A549 (cell line): ENCODE measurements at regions of chr11 and their contacts with region 1.

Region 1: DNA sequence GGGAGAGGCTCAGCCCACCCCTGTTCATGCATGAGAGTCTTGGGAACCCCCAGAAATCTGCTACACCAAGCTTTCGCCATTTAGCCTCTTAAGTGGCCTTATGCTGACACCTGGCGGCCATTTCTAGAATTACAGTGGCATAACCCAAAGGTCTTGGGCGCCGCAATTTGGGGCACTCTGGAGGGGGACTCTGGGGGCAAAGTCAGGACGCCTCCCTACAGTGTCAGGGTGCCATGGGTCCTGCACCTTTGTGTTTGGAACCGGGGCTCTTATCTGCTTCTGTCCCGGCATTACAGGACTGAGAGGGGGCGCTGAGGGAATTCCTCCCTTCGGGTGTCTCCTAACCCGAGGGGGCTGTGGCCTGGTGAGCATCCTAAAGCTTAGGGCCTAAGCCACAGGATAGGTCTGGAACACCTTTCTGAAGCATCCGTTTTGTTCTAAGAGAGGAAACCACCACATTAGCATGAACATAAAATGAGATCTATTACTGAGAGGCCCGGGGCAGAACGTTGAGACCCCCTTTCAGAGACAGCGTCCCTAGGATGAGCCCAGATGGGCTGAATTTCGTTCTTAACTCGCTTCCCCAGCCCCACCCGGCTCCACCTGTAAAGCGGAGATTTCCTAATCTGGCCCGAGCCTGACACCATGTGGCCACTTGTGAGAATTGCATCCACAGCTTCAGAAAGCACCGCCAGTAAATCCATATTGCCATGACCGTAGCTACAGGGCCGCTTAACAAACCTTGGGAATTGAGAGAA is 9.3 kb downstream of the INS start:
- DNase-seq: peak; percentile 85 to 90
- ATAC-seq: peak; percentile 33 to 53; a peak in 5 of 6 replicates
- H3K4me3 ChIP-seq: no peak overlapping the region
- H3K27ac ChIP-seq: peak overlapping the region; percentile 9 to 63; a peak in 4 of 6 replicates
- H3K4me1 ChIP-seq: no peaks in the 10 kb centered on the region
- CTCF ChIP-seq: peak; percentile 64
- EP300 ChIP-seq: no peak
- POLR2A ChIP-seq: no peak
- RAD21 ChIP-seq: peak; percentile 78 to 89

Region 2: GRCh38 chr11:1694064-1694845 is 457.4 kb before region 1 on chr11:
- CTCF ChIA-PET with region 1: interaction called, 179 read pairs
- POLR2A ChIA-PET with region 1: no interaction called
- DNase-seq: peak; percentile 80 to 88
- ATAC-seq: peak; percentile 82 to 95
- H3K4me3 ChIP-seq: peak overlapping the region; percentile 62
- H3K27ac ChIP-seq: peak overlapping the region; percentile 87 to 92
- H3K4me1 ChIP-seq: no peaks in the 10 kb centered on the region
- CTCF ChIP-seq: peak; percentile 88
- EP300 ChIP-seq: no peak
- POLR2A ChIP-seq: no peak
- RAD21 ChIP-seq: peak; percentile 94 to 99

Region 3: DNA sequence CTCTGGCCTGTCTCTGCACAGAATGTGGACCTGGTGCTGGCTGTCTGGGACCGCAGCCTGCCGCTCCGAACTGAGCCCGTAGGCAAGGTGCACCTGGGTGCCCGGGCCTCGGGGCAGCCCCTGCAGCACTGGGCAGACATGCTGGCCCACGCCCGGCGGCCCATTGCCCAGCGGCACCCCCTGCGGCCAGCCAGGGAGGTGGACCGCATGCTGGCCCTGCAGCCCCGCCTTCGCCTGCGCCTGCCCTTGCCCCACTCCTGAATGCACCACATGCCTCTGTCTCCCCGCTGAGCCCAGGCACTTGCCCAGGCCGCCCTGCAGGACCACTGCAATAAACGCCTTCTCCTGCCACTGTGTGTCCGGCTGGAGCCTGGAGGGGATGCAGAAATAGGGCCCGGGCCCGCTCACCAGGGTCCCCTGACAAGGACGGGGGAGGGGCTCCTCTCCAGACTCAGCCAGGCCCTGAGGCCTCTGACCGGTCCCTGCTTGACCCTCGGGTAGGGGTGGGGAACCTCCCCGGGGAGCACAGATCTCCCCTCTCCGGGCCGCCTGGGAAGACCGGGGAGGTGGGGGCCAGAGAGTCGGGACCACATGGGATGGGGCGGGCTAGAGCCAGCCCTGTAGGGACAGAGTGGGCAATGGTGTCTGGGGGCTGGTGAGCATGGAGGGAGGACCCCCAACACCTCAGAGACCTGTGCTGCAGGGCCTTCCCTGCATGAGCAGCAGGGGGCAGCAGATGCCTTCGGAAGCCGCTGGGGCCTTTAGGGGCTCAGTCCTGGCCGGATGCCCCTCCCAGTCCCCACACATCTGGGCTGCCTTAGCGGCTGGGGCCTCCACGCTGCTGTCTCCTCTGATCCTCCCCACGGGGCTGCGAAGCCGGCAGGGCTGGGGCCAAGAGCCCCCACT is 314.3 kb before region 1 on chr11:
- CTCF ChIA-PET with region 1: interaction called, 258 read pairs
- POLR2A ChIA-PET with region 1: no interaction called
- DNase-seq: peak; percentile 59 to 70
- ATAC-seq: peak; percentile 46 to 87
- H3K4me3 ChIP-seq: no peak overlapping the region
- H3K27ac ChIP-seq: peak overlapping the region in 1 of 2 experiments; percentile 73; a peak in 3 of 6 replicates
- H3K4me1 ChIP-seq: peaks cover 24% of the 10 kb centered on the region
- CTCF ChIP-seq: peak; percentile 89
- EP300 ChIP-seq: no peak
- POLR2A ChIP-seq: no peak
- RAD21 ChIP-seq: peak; percentile 93 to 97

Region 4: GRCh38 chr11:1889224-1890120 is 262.2 kb before region 1 on chr11:
- CTCF ChIA-PET with region 1: interaction called, 334 read pairs
- POLR2A ChIA-PET with region 1: no interaction called
- DNase-seq: no peak
- ATAC-seq: no peak; a peak in 1 of 6 replicates
- H3K4me3 ChIP-seq: no peak overlapping the region
- H3K27ac ChIP-seq: no peak overlapping the region
- H3K4me1 ChIP-seq: no peaks in the 10 kb centered on the region
- CTCF ChIP-seq: no peak
- EP300 ChIP-seq: no peak
- POLR2A ChIP-seq: no peak
- RAD21 ChIP-seq: no peak

Region 5: DNA sequence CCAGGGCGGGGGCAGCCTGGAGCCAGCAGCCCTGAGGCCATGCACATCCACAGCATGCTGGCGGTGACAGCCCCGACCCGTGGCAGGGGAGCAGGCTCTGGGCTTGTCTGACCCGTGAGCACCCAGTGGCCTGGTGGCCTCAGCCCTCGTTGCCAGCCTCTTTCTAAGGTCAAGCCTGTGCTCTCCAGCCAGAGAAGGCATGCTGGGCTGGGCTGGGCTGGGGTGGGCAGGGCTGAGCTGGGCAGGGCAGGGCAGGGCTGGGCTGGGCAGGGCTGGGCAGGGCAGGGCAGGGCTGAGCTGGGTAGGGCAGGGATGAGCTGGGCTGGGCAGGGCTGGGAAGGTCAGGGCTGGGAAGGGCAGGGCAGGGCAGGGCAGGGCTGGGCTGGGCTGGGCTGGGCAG is 164.7 kb before region 1 on chr11:
- CTCF ChIA-PET with region 1: interaction called, 16 read pairs
- POLR2A ChIA-PET with region 1: no interaction called
- DNase-seq: no peak
- ATAC-seq: peak; percentile 65 to 74
- H3K4me3 ChIP-seq: no peak overlapping the region
- H3K27ac ChIP-seq: no peak overlapping the region
- H3K4me1 ChIP-seq: no peaks in the 10 kb centered on the region
- CTCF ChIP-seq: no peak
- EP300 ChIP-seq: no peak
- POLR2A ChIP-seq: no peak
- RAD21 ChIP-seq: no peak

Region 6: GRCh38 chr11:2092956-2093412 is 58.7 kb before region 1 on chr11:
- CTCF ChIA-PET with region 1: interaction called, 59 read pairs
- POLR2A ChIA-PET with region 1: no interaction called
- DNase-seq: no peak
- ATAC-seq: no peak
- H3K4me3 ChIP-seq: no peak overlapping the region
- H3K27ac ChIP-seq: no peak overlapping the region
- H3K4me1 ChIP-seq: no peaks in the 10 kb centered on the region
- CTCF ChIP-seq: no peak
- EP300 ChIP-seq: no peak
- POLR2A ChIP-seq: no peak
- RAD21 ChIP-seq: no peak

Region 7: GRCh38 chr11:2137202-2138071 is 14.2 kb before region 1 on chr11:
- CTCF ChIA-PET with region 1: interaction called, 152 read pairs
- POLR2A ChIA-PET with region 1: no interaction called
- DNase-seq: peak; percentile 76 to 91
- ATAC-seq: peak; percentile 69 to 89
- H3K4me3 ChIP-seq: peak overlapping the region; percentile 52
- H3K27ac ChIP-seq: peak overlapping the region; percentile 17 to 65; a peak in 4 of 6 replicates
- H3K4me1 ChIP-seq: peaks cover 19% of the 10 kb centered on the region
- CTCF ChIP-seq: no peak
- EP300 ChIP-seq: no peak
- POLR2A ChIP-seq: no peak
- RAD21 ChIP-seq: no peak

Region 8: GRCh38 chr11:2248762-2249161 is 97.1 kb after region 1 on chr11:
- CTCF ChIA-PET with region 1: no interaction called
- POLR2A ChIA-PET with region 1: no interaction called
- DNase-seq: no peak
- ATAC-seq: no peak
- H3K4me3 ChIP-seq: no peak overlapping the region
- H3K27ac ChIP-seq: no peak overlapping the region
- H3K4me1 ChIP-seq: no peaks in the 10 kb centered on the region
- CTCF ChIP-seq: no peak
- EP300 ChIP-seq: no peak
- POLR2A ChIP-seq: no peak
- RAD21 ChIP-seq: no peak

Region 9: DNA sequence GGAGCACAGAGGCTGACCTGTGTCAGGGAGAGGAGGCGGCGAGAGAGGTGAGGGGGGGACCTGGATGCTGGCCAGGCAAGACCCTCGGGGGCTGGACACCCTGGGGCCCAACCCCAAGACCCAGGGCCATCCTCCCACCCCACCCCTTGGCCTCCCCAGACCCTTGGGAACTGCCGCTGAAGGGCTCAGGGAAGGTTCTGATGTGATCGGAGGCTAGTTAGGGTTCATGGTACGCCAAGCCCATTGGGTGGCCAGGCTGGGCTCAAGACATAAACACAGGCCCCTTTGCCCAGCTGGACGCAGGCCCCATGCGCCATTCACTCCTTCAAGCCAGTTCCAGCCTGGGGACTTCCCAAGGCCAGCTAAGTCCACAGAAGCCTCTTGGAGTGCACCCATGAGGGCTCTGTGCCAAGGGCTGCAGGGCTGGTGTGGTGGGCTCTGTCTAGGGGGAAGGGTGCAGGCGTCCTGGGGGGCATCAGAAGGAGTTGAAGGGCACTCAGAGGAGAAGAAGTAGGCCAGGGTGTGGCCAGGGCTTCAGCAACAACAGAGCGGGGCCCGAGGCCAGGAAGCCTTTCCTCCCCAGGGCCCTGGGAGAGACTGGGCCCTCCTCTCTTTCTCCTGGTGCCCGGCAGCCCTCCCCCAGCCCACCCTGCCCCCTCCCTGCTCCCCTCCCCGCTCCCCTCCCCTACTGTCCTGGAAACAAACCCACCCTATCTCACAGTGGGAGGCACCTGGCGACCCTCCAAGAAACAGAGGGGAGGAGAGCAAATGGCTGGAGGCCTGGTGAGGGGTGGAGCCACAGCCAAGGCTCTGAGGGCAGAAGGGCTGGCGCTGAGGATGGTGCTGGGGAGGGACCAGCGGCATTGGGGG is 163.1 kb after region 1 on chr11:
- CTCF ChIA-PET with region 1: no interaction called
- POLR2A ChIA-PET with region 1: no interaction called
- DNase-seq: no peak
- ATAC-seq: peak in 1 of 2 experiments; percentile 59; a peak in 3 of 6 replicates
- H3K4me3 ChIP-seq: no peak overlapping the region
- H3K27ac ChIP-seq: peak overlapping the region in 1 of 2 experiments; percentile 40; a peak in 3 of 6 replicates
- H3K4me1 ChIP-seq: peaks cover 4% of the 10 kb centered on the region; the same call in 1 of the 3 replicates
- CTCF ChIP-seq: no peak
- EP300 ChIP-seq: no peak
- POLR2A ChIP-seq: no peak
- RAD21 ChIP-seq: no peak

Region 10: DNA sequence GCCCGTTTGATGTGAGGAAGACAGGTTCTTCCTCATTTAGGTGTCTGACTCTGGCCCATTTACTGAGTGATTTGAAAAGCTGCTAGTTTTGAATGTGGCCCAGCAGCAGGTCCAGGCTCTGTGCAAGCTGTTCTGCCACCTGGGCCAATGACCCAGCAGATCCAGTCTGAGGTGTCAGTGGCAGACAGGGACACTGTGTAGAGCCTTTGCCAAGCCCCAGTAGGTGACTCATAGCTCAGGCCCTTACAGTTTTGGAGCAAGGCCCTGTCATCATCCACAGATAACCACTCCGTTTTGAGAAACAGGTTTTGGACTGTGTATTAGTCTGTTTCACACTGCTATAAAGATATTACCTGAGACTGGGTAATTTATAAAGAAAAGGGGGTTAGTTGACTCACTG is 174.0 kb after region 1 on chr11:
- CTCF ChIA-PET with region 1: no interaction called
- POLR2A ChIA-PET with region 1: no interaction called
- DNase-seq: no peak
- ATAC-seq: no peak
- H3K4me3 ChIP-seq: no peak overlapping the region
- H3K27ac ChIP-seq: no peak overlapping the region
- H3K4me1 ChIP-seq: no peaks in the 10 kb centered on the region
- CTCF ChIP-seq: no peak
- EP300 ChIP-seq: no peak
- POLR2A ChIP-seq: no peak
- RAD21 ChIP-seq: no peak

Region 11: GRCh38 chr11:2409611-2410468 is 258.2 kb after region 1 on chr11:
- CTCF ChIA-PET with region 1: no interaction called
- POLR2A ChIA-PET with region 1: no interaction called
- DNase-seq: no peak
- ATAC-seq: no peak
- H3K4me3 ChIP-seq: no peak overlapping the region
- H3K27ac ChIP-seq: no peak overlapping the region
- H3K4me1 ChIP-seq: no peaks in the 10 kb centered on the region
- CTCF ChIP-seq: no peak
- EP300 ChIP-seq: no peak
- POLR2A ChIP-seq: no peak
- RAD21 ChIP-seq: no peak